ENCODE measurements at regions of chr16 and their contacts with region 1.

Region 1: GRCh38 chr16:87950765-87951549 is at the start of gene BANP:
- DNase-seq: peak; percentile 92 to 100 (median 96)
- ATAC-seq: peak; percentile 93
- H3K4me3 ChIP-seq: peak within 1 kb of the TSS; percentile 72 to 98
- H3K4me3 Mint-ChIP-seq: peak within 1 kb of the TSS; percentile 97
- H3K27ac ChIP-seq: peak within 1 kb of the TSS; percentile 88 to 96
- H3K27ac Mint-ChIP-seq: peak within 1 kb of the TSS; percentile 99
- H3K4me1 ChIP-seq: peaks cover 37% of the 10 kb centered on the region
- H3K4me1 Mint-ChIP-seq: peaks cover 42% of the 10 kb centered on the region
- H3K27me3 ChIP-seq: no peaks in the 10 kb centered on the region
- H3K27me3 Mint-ChIP-seq: no peaks in the 10 kb centered on the region
- CTCF ChIP-seq: peak; percentile 41
- total RNA-seq, gene BANP: 55.3 to 60.6 TPM

Region 2: GRCh38 chr16:87966685-87967185 is 15.8 kb after region 1 on chr16:
- CTCF ChIA-PET with region 1: interaction called, 3 read pairs
- POLR2A ChIA-PET with region 1: no interaction called
- intact Hi-C with region 1: loop called in 1 of 2 experiments (anchors 1 kb)
- DNase-seq: no peak
- ATAC-seq: no peak
- H3K4me3 ChIP-seq: no peak overlapping the region
- H3K4me3 Mint-ChIP-seq: peak overlapping the region; percentile 59
- H3K27ac ChIP-seq: no peak overlapping the region
- H3K27ac Mint-ChIP-seq: peak overlapping the region; percentile 81
- H3K4me1 ChIP-seq: peaks cover 32% of the 10 kb centered on the region
- H3K4me1 Mint-ChIP-seq: peaks cover 62% of the 10 kb centered on the region
- H3K27me3 ChIP-seq: no peaks in the 10 kb centered on the region
- H3K27me3 Mint-ChIP-seq: no peaks in the 10 kb centered on the region
- CTCF ChIP-seq: no peak

Region 3: DNA sequence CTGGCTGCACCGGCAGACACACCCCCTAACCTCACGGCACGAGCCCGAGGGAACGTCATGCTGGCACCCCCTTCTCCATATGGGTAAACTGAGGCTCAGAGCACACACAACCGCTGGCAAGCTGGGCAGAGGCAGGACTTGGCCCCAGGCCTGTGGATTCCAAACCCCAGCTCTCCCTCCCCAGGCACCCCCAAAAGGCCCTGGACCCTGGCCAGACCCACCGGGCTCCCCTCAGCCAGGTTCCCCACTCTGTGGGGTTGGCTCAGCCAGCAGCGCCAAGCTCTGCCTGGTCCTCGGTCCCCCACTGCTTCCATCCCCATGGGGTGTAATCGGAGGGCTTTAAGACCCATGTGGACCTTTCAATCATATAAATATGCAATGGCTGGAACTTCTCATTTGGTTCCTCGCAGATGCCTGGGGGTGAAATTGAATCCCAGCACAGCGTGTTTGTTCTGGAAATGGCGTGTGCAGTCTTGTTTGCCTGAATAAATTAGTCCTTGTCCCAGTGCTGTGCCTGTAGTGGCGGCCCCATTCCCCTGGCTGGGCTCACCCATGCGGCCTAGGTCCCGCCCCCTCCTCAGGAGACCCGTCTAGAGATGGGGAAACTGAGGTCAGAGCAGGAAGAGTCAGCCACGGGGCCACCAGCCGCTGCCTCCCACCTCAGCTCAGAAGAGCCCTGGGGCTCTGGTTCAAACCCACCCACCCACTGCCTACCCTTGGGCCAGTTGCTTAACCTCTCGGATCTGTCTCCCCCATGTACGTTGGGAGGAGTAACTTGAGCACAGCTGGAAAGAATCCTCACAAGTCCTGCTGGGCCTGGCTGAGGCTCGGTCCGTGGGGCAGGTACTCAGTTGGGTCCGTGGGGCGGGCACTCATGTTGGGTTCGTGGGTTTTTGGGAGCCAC is 559.4 kb after region 1 on chr16:
- CTCF ChIA-PET with region 1: no interaction called
- POLR2A ChIA-PET with region 1: no interaction called
- intact Hi-C with region 1: no loop called
- DNase-seq: no peak
- ATAC-seq: no peak
- H3K4me3 ChIP-seq: no peak overlapping the region
- H3K4me3 Mint-ChIP-seq: no peak overlapping the region
- H3K27ac ChIP-seq: no peak overlapping the region
- H3K27ac Mint-ChIP-seq: no peak overlapping the region
- H3K4me1 ChIP-seq: peaks cover 2% of the 10 kb centered on the region
- H3K4me1 Mint-ChIP-seq: no peaks in the 10 kb centered on the region
- H3K27me3 ChIP-seq: no peaks in the 10 kb centered on the region
- H3K27me3 Mint-ChIP-seq: no peaks in the 10 kb centered on the region
- CTCF ChIP-seq: no peak